ENCODE measurements at regions of chr4 and their contacts with region 1.

Region 1: DNA sequence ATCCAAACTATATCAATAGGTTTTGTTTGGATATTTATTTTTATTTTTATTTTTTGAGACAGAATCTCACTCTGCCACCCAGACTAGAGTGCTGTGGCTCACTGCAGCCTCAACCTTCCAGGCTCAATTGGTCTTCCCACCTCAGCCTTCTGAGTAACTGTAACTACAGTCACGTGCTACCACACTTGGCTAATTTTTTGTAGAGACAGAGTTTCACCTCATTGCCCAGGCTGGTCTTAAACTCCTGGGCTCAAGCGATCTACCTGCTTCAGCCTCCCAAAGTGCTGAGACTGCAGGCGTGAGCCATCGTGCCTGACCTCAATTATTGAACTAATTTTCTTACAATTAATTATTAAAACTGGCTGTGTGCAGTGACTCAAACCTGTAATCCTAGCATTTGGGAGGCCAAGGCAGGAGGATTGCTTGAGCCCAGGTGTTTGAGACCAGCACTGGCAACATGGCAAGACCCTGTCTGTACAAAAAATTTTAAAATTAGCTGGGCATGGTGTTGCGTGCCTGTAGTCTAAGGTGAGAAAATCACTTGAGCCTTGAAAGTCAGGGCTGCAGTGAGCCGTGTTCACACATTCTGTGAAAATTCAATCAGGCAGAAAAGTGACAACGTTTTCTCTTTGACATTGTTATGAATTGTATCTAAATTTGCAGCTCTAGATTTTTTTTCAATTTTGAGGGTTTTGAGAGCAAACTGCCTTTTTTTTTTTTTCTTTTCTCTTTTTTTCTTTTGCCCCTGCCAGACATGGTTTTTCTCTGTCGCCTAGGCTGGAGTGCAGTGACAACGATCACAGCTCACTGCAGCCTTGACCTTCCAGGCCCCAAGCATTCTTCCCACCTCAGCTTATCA is 66.0 kb downstream of the UBE2K start:
- DNase-seq: no peak
- ATAC-seq: no peak
- H3K4me3 ChIP-seq: no peak overlapping the region
- H3K4me3 Mint-ChIP-seq: no peak overlapping the region
- H3K27ac ChIP-seq: no peak overlapping the region
- H3K27ac Mint-ChIP-seq: no peak overlapping the region
- H3K4me1 ChIP-seq: no peaks in the 10 kb centered on the region
- H3K4me1 Mint-ChIP-seq: no peaks in the 10 kb centered on the region
- H3K27me3 ChIP-seq: no peaks in the 10 kb centered on the region
- H3K27me3 Mint-ChIP-seq: no peaks in the 10 kb centered on the region

Region 2: DNA sequence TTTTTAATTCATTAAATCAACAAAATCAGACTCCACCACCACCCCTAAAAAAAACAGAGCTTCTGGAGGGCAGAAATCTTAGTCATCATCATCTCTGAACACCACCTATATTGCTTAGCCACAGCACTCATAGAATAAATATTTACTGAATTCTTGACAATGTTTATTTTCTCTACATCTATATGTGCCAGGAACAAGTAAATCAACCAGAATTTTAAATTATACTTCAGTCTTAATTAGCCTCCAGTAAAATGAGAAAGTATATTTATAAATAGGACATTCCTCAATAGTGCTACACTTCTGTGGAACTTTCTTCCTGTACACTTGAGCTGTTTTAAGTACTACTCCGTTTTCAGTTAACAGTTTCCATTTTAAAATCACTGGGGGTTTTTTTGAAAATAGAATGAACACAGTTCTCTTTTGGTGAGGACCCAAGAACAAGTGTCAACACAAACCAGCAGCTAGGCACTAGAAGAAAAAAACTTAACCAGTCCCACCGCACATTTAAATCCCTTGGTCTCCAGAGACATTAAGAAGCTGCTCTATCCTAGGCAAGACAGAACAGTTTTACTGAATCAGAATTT is 150.8 kb before region 1 on chr4:
- CTCF ChIA-PET with region 1: no interaction called
- POLR2A ChIA-PET with region 1: no interaction called
- DNase-seq: no peak
- ATAC-seq: no peak
- H3K4me3 ChIP-seq: no peak overlapping the region
- H3K4me3 Mint-ChIP-seq: no peak overlapping the region
- H3K27ac ChIP-seq: no peak overlapping the region
- H3K27ac Mint-ChIP-seq: no peak overlapping the region
- H3K4me1 ChIP-seq: no peaks in the 10 kb centered on the region
- H3K4me1 Mint-ChIP-seq: peaks cover 0 to 5% (median 0%) of the 10 kb centered on the region in 3 donors
- H3K27me3 ChIP-seq: no peaks in the 10 kb centered on the region
- H3K27me3 Mint-ChIP-seq: no peaks in the 10 kb centered on the region

Region 3: DNA sequence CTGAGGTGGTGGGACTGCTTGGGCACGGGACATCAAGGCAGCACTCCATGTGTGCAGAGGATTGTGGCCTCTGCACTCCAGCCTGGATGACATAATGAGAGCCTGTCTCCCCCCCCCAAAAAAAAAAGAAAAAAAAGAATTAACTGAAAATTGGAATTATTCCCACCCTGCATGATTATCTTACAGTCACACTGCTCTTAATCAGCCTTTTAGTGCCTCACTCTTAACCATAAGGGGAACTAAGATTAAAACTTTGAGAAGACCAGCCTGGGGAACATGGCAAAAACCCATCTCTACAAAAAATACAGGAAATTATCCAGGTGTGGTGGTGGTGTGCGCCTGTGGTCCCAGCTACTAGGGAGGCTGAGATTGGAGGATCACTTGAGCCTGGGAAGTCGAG is 28.6 kb after region 1 on chr4:
- CTCF ChIA-PET with region 1: no interaction called
- POLR2A ChIA-PET with region 1: interaction called in 1 of 2 experiments, 10 read pairs
- DNase-seq: no peak
- ATAC-seq: no peak
- H3K4me3 ChIP-seq: no peak overlapping the region
- H3K4me3 Mint-ChIP-seq: no peak overlapping the region
- H3K27ac ChIP-seq: no peak overlapping the region
- H3K27ac Mint-ChIP-seq: no peak overlapping the region
- H3K4me1 ChIP-seq: no peaks in the 10 kb centered on the region
- H3K4me1 Mint-ChIP-seq: no peaks in the 10 kb centered on the region
- H3K27me3 ChIP-seq: no peaks in the 10 kb centered on the region
- H3K27me3 Mint-ChIP-seq: no peaks in the 10 kb centered on the region